ENCODE measurements at regions of chr11 and their contacts with region 1.

Region 1: GRCh38 chr11:73350908-73351636 is 25.1 kb upstream of the RELT start:
- DNase-seq: peak; percentile 38
- ATAC-seq: peak; percentile 94
- H3K4me3 Mint-ChIP-seq: no peak overlapping the region
- H3K27ac Mint-ChIP-seq: peak overlapping the region; percentile 33
- H3K4me1 Mint-ChIP-seq: no peaks in the 10 kb centered on the region
- H3K27me3 Mint-ChIP-seq: no peaks in the 10 kb centered on the region
- CTCF ChIP-seq: peak; percentile 97

Region 2: DNA sequence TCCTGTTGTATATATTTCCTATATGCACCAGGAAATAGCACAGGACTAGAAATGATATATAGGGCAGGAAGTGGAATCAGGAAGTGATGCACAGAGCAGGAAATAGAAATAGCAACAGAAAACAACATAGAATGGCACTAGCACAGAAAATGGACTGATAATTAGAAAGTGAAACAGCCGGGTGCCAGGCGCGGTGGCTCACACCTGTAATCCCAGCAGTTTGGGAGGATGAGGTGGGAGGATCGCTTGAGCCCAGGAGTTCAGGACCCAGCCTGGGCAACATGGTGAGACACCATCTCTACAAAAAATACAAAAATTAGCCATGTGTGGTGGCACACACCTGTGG is 15.2 kb after region 1 on chr11:
- CTCF ChIA-PET with region 1: interaction called, 23 read pairs
- POLR2A ChIA-PET with region 1: interaction called, 3 read pairs
- intact Hi-C with region 1: loop called (anchors 2 kb)
- DNase-seq: no peak
- ATAC-seq: peak; percentile 76
- H3K4me3 Mint-ChIP-seq: peak overlapping the region; percentile 12
- H3K27ac Mint-ChIP-seq: peak overlapping the region; percentile 69
- H3K4me1 Mint-ChIP-seq: peaks cover 49% of the 10 kb centered on the region
- H3K27me3 Mint-ChIP-seq: no peaks in the 10 kb centered on the region
- CTCF ChIP-seq: no peak

Region 3: GRCh38 chr11:73384872-73385689 is 34.0 kb after region 1 on chr11:
- CTCF ChIA-PET with region 1: interaction called, 31 read pairs
- POLR2A ChIA-PET with region 1: interaction called, 7 read pairs
- intact Hi-C with region 1: no loop called
- DNase-seq: peak; percentile 82
- ATAC-seq: peak; percentile 63
- H3K4me3 Mint-ChIP-seq: peak overlapping the region; percentile 76
- H3K27ac Mint-ChIP-seq: peak overlapping the region; percentile 89
- H3K4me1 Mint-ChIP-seq: peaks cover 100% of the 10 kb centered on the region
- H3K27me3 Mint-ChIP-seq: no peaks in the 10 kb centered on the region
- CTCF ChIP-seq: no peak

Region 4: DNA sequence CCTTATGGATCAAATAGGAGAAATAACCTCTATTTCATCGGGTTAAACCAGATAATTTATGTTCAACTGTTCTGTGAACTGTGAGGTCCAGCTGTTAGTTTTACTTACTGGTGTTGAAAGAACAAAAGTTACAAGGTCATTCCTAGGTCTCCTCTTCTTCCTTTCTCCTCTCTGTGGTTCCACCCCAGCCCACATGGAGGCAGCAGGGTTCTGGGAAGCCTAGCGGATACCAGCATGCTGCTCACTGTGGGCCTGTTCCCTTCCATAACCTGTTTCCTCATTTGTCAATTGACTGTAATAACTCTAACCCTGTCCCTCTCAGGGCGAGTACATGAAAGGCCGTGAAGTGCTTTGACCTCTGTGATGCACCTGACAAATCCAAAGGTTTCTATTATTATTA is 53.0 kb after region 1 on chr11:
- CTCF ChIA-PET with region 1: interaction called, 66 read pairs
- POLR2A ChIA-PET with region 1: no interaction called
- intact Hi-C with region 1: no loop called
- DNase-seq: no peak
- ATAC-seq: no peak
- H3K4me3 Mint-ChIP-seq: no peak overlapping the region
- H3K27ac Mint-ChIP-seq: no peak overlapping the region
- H3K4me1 Mint-ChIP-seq: peaks cover 4% of the 10 kb centered on the region
- H3K27me3 Mint-ChIP-seq: no peaks in the 10 kb centered on the region
- CTCF ChIP-seq: no peak

Region 5: DNA sequence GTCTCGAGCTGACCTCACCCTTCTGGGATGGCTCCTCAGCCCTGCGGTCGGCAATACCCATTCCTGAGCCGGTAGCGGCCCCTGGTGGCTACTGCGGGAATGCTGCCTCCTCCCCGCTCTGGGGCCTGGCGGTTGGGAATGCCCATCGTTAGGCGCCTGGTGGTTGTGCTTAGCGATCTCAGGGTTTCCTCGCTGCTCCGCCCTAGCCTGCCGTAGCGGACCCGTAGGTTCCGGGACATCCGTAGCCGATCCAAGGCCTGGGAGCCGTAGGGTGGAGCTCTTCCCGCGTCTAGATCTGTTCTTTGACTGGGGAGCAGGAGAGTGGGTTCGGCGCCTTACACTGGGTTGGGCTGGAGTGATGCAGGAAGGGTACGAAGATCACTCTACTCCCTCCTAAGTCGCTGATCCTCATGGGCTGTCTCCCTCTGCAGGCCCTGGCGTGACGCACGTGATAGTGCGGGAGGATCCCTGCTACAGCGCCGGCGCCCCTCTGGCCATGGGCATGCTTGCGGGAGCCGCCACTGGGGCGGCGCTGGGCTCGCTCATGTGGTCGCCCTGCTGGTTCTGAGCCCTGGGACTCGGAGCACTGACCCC is 310.1 kb after region 1 on chr11:
- CTCF ChIA-PET with region 1: interaction called, 91 read pairs
- POLR2A ChIA-PET with region 1: no interaction called
- intact Hi-C with region 1: loop called (anchors 1 kb)
- DNase-seq: peak; percentile 85
- ATAC-seq: peak; percentile 99
- H3K4me3 Mint-ChIP-seq: peak overlapping the region; percentile 67
- H3K27ac Mint-ChIP-seq: no peak overlapping the region
- H3K4me1 Mint-ChIP-seq: peaks cover 3% of the 10 kb centered on the region
- H3K27me3 Mint-ChIP-seq: no peaks in the 10 kb centered on the region
- CTCF ChIP-seq: peak; percentile 89

Region 6: GRCh38 chr11:73693899-73694525 is 342.9 kb after region 1 on chr11:
- CTCF ChIA-PET with region 1: no interaction called
- POLR2A ChIA-PET with region 1: no interaction called
- intact Hi-C with region 1: no loop called
- DNase-seq: no peak
- ATAC-seq: no peak
- H3K4me3 Mint-ChIP-seq: no peak overlapping the region
- H3K27ac Mint-ChIP-seq: no peak overlapping the region
- H3K4me1 Mint-ChIP-seq: no peaks in the 10 kb centered on the region
- H3K27me3 Mint-ChIP-seq: no peaks in the 10 kb centered on the region
- CTCF ChIP-seq: no peak

Measured in activated B cell treated with CpG ODN at 0.5 μM for 24 hours (primary cell).